GM12878 (cell line): ENCODE measurements at regions of chr6 and their contacts with region 1.

Region 1: GRCh38 chr6:161694995-161695394 is 421.1 kb upstream of the AGPAT4 start:
- DNase-seq: no peak
- ATAC-seq: peak; percentile 79
- H3K4me3 ChIP-seq: no peak overlapping the region
- H3K27ac ChIP-seq: no peak overlapping the region
- H3K4me1 ChIP-seq: no peaks in the 10 kb centered on the region
- H3K27me3 ChIP-seq: no peaks in the 10 kb centered on the region
- CTCF ChIP-seq: peak; percentile 50 to 57 (median 55); a peak in 5 of 6 replicates
- EP300 ChIP-seq: no peak
- POLR2A ChIP-seq: no peak
- RAD21 ChIP-seq: peak; percentile 78

Region 2: GRCh38 chr6:161393839-161394364 is 301.1 kb before region 1 on chr6:
- CTCF ChIA-PET with region 1: interaction called, 16 read pairs
- POLR2A ChIA-PET with region 1: no interaction called
- RAD21 ChIA-PET with region 1: interaction called, 3 read pairs
- SMC1A ChIA-PET with region 1: interaction called, 5 read pairs
- in situ Hi-C with region 1: loop called (anchors 10 kb)
- intact Hi-C with region 1: loop called (anchors 1 kb)
- DNase-seq: peak; percentile 43
- ATAC-seq: peak; percentile 100
- H3K4me3 ChIP-seq: no peak overlapping the region
- H3K27ac ChIP-seq: no peak overlapping the region
- H3K4me1 ChIP-seq: no peaks in the 10 kb centered on the region; the same call in 1 of the 2 replicates
- H3K27me3 ChIP-seq: no peaks in the 10 kb centered on the region
- CTCF ChIP-seq: peak; percentile 42 to 81 (median 50); a peak in 5 of 6 replicates
- EP300 ChIP-seq: no peak
- POLR2A ChIP-seq: no peak
- RAD21 ChIP-seq: peak; percentile 84

Region 3: GRCh38 chr6:161429921-161430490 is 265.0 kb before region 1 on chr6:
- CTCF ChIA-PET with region 1: no interaction called
- POLR2A ChIA-PET with region 1: no interaction called
- RAD21 ChIA-PET with region 1: no interaction called
- SMC1A ChIA-PET with region 1: no interaction called
- in situ Hi-C with region 1: loop called (anchors 10 kb)
- intact Hi-C with region 1: loop called (anchors 5 kb)
- DNase-seq: no peak
- ATAC-seq: no peak
- H3K4me3 ChIP-seq: no peak overlapping the region
- H3K27ac ChIP-seq: no peak overlapping the region
- H3K4me1 ChIP-seq: no peaks in the 10 kb centered on the region
- H3K27me3 ChIP-seq: no peaks in the 10 kb centered on the region
- CTCF ChIP-seq: peak in 2 of 3 experiments; percentile 7 to 10; a peak in 1 of 6 replicates
- EP300 ChIP-seq: no peak
- POLR2A ChIP-seq: no peak
- RAD21 ChIP-seq: peak; percentile 29; the same call in 1 of the 2 replicates

Region 4: GRCh38 chr6:161439093-161439492 is 255.9 kb before region 1 on chr6:
- CTCF ChIA-PET with region 1: no interaction called
- POLR2A ChIA-PET with region 1: no interaction called
- RAD21 ChIA-PET with region 1: no interaction called
- SMC1A ChIA-PET with region 1: no interaction called
- in situ Hi-C with region 1: no loop called
- intact Hi-C with region 1: loop called (anchors 5 kb)
- DNase-seq: no peak
- ATAC-seq: no peak
- H3K4me3 ChIP-seq: no peak overlapping the region
- H3K27ac ChIP-seq: no peak overlapping the region
- H3K4me1 ChIP-seq: no peaks in the 10 kb centered on the region
- H3K27me3 ChIP-seq: no peaks in the 10 kb centered on the region
- CTCF ChIP-seq: no peak
- EP300 ChIP-seq: no peak
- POLR2A ChIP-seq: no peak
- RAD21 ChIP-seq: no peak